A673 (cell line): ENCODE measurements at regions of chr13 and their contacts with region 1.

Region 1: DNA sequence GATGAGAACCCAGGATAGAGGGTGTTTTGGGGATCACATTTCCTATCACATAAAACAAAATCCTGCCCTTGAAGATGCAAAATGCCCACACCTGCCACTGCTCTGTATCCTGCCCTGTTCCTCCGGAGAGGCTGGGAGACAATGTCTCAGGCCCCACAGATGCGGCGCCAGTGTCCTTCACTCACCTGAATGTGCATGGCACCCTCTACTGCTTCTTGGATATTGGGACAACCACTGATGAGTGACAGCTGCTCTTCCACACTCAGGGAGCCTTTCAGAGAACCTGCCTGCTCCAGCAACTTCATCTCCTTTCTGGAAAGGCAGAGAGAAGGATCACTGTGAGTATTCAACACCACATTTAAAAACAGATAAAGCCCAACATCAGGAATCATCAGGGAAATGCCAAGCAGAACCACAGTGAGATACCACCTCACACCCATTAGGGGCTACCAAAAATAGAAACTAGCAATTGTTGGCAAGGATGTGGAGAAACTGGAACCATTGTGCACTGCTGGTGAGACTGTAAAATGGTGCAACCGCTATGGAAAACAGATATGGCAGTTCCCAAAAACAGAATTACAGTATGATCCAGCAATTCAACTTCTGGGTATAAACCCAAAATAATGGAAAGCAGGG is 36.4 kb downstream of the CRYL1 start:
- DNase-seq: peak; percentile 70
- H3K4me3 ChIP-seq: no peak overlapping the region
- H3K27ac ChIP-seq: no peak overlapping the region
- H3K4me1 ChIP-seq: no peaks in the 10 kb centered on the region
- H3K27me3 ChIP-seq: no peaks in the 10 kb centered on the region
- CTCF ChIP-seq: peak; percentile 69

Region 2: GRCh38 chr13:19818210-19818842 is 671.0 kb before region 1 on chr13:
- CTCF ChIA-PET with region 1: no interaction called
- POLR2A ChIA-PET with region 1: no interaction called
- intact Hi-C with region 1: no loop called
- DNase-seq: peak; percentile 44
- H3K4me3 ChIP-seq: no peak overlapping the region
- H3K27ac ChIP-seq: no peak overlapping the region
- H3K4me1 ChIP-seq: no peaks in the 10 kb centered on the region
- H3K27me3 ChIP-seq: no peaks in the 10 kb centered on the region
- CTCF ChIP-seq: peak; percentile 82

Region 3: GRCh38 chr13:20182231-20182846 is 307.0 kb before region 1 on chr13:
- CTCF ChIA-PET with region 1: no interaction called
- POLR2A ChIA-PET with region 1: no interaction called
- intact Hi-C with region 1: loop called (anchors 1 kb)
- DNase-seq: peak; percentile 85
- H3K4me3 ChIP-seq: no peak overlapping the region
- H3K27ac ChIP-seq: no peak overlapping the region
- H3K4me1 ChIP-seq: peaks cover 10% of the 10 kb centered on the region
- H3K27me3 ChIP-seq: no peaks in the 10 kb centered on the region
- CTCF ChIP-seq: peak; percentile 84

Region 4: DNA sequence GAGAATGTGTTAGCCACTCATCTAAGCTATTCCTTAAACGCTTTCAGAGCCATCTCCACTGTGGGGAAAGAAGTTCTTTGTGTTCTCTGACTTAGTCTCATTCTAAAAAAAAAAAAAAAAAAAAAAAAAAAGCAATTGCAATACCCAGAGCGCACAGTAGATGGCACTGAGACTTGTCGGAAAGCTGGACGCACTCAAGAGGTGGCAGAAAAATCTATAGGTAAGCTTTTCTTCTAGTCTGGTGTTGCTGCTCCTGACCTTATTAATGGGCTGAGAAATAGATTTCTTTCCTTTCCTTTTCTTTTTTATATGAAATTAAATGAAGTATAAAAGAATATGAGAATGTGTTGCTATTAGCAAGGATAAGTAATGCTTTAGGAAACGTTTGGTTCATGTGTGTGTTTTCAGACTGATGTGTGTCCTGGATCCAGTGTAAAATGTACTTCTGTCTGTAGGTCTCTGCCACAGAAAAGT is 291.9 kb before region 1 on chr13:
- CTCF ChIA-PET with region 1: interaction called, 12 read pairs
- POLR2A ChIA-PET with region 1: no interaction called
- intact Hi-C with region 1: loop called (anchors 1 kb)
- DNase-seq: peak; percentile 63
- H3K4me3 ChIP-seq: no peak overlapping the region
- H3K27ac ChIP-seq: no peak overlapping the region
- H3K4me1 ChIP-seq: peaks cover 12% of the 10 kb centered on the region
- H3K27me3 ChIP-seq: peaks cover 54% of the 10 kb centered on the region
- CTCF ChIP-seq: peak; percentile 80

Region 5: DNA sequence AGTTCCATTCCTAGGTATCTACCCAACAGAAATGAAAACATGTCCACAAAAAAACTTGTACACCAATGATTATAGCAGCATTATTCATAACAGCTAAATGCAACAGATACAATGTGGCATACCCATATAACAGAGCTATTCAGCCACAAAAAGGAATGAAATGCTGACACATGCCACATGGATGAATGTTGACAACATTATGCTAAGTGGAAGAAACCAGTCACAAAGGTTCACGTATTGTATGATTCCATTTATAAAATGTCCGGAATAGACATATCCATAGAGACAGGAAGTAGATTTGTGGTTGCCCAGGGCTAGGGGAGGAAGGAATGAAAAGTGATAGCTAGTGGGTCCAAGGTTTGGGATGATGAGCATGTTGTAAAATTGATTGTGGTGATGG is 25.6 kb after region 1 on chr13:
- CTCF ChIA-PET with region 1: no interaction called
- POLR2A ChIA-PET with region 1: no interaction called
- intact Hi-C with region 1: no loop called
- DNase-seq: no peak
- H3K4me3 ChIP-seq: no peak overlapping the region
- H3K27ac ChIP-seq: no peak overlapping the region
- H3K4me1 ChIP-seq: no peaks in the 10 kb centered on the region
- H3K27me3 ChIP-seq: no peaks in the 10 kb centered on the region
- CTCF ChIP-seq: no peak